H1 (cell line): ENCODE measurements at regions of chr7 and their contacts with region 1.

Region 1: DNA sequence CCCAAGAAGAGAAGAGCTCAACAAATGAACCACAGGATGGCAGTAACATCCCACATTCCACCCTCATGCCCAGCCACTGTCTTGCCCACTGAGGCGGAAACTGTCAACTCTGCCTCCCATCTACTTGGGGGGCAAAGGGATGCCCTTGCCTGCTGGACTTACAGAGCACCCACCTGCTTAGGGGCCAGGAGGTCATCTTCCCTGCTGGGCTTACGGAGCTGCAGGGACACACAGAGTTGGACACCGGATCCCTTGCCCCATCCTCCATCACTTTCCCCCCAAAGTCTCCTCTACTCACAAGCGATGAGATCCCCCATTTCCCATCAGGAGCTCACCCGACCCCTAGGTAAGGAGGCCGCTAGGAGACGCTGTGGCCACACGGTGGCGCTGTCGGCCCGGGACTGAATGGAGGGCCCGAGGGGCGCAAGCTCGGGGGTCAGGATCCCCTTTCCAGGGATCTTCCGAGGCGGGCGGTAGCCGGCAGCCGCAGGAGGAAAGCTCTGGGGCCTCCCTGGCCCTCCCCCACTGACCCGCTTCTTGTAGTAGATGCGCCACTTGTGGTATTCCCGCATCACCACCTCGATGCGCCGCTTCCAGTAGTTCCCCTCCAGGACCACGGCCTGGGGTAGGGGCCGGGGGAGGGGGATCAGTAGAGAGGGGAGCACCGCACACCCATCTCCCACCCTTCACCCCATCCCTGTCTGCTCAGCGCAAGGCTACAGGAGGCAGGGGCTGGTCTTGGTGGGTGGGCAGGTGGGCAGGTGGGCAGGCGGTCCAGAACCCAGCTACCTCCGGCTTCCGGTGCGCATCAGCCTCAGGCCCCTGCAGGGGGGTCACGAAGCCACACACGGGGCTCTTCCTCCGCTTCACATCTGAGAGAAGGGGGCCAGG is 17.3 kb downstream of the MLXIPL start:
- DNase-seq: peak in 1 of 2 experiments; percentile 97
- H3K4me3 ChIP-seq: peak overlapping the region in 3 of 4 experiments; percentile 11 to 61 (median 26); a peak in 5 of 8 replicates
- H3K27ac ChIP-seq: no peak overlapping the region
- H3K4me1 ChIP-seq: peaks cover 0 to 7% (median 4%) of the 10 kb centered on the region in 4 experiments; a peak in 6 of 7 replicates
- H3K27me3 ChIP-seq: no peaks in the 10 kb centered on the region; a peak in 1 of 7 replicates
- CTCF ChIP-seq: peak; percentile 91 to 97 (median 92)
- EP300 ChIP-seq: no peak
- POLR2A ChIP-seq: no peak
- RAD21 ChIP-seq: peak; percentile 96 to 97

Region 2: GRCh38 chr7:73593207-73594045 is 13.6 kb before region 1 on chr7:
- CTCF ChIA-PET with region 1: interaction called, 74 read pairs
- POLR2A ChIA-PET with region 1: interaction called, 6 read pairs
- DNase-seq: no peak
- H3K4me3 ChIP-seq: no peak overlapping the region
- H3K27ac ChIP-seq: no peak overlapping the region
- H3K4me1 ChIP-seq: peaks cover 0 to 10% (median 3%) of the 10 kb centered on the region in 4 experiments; a peak in 4 of 7 replicates
- H3K27me3 ChIP-seq: peaks cover 0 to 4% (median 4%) of the 10 kb centered on the region in 4 experiments; a peak in 4 of 7 replicates
- CTCF ChIP-seq: no peak
- EP300 ChIP-seq: no peak
- POLR2A ChIP-seq: no peak
- RAD21 ChIP-seq: peak in 1 of 2 experiments; percentile 4; a peak in 1 of 4 replicates

Region 3: DNA sequence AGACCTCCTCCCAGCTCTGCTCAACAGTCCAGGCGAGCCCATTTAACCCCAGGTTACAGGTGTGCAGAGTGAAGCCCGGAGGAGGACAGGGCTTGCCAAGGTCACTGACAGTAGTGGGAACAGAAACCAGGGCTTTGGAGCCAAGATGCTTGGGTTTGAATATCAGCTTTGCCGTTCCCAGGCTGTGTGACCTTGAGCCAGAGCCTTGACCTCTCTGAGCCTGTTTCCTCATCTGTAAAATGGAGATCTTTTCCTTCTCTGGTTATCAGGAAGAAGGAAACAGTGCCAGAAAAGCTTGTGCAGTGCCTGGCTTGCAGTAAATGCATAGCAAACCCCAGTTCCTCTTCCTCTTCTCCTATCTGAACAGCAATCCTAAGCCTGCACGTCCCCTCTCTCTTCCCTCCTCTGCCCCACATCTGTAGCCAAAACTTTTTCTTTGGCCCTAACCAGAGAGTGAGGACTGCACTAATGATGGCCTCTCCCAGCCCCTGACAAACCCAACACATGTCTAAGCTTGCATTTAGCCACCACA is 38.7 kb after region 1 on chr7:
- CTCF ChIA-PET with region 1: interaction called, 21 read pairs
- POLR2A ChIA-PET with region 1: no interaction called
- DNase-seq: no peak
- H3K4me3 ChIP-seq: no peak overlapping the region
- H3K27ac ChIP-seq: no peak overlapping the region
- H3K4me1 ChIP-seq: peaks cover 0 to 14% (median 7%) of the 10 kb centered on the region in 4 experiments; a peak in 6 of 7 replicates
- H3K27me3 ChIP-seq: peaks cover 0 to 30% (median 25%) of the 10 kb centered on the region in 4 experiments; a peak in 6 of 7 replicates
- CTCF ChIP-seq: no peak
- EP300 ChIP-seq: no peak
- POLR2A ChIP-seq: no peak
- RAD21 ChIP-seq: no peak

Region 4: GRCh38 chr7:73667344-73668102 is 60.5 kb after region 1 on chr7 and contains the start of gene VPS37D:
- CTCF ChIA-PET with region 1: interaction called, 72 read pairs
- POLR2A ChIA-PET with region 1: interaction called, 3 read pairs
- DNase-seq: peak; percentile 70 to 99
- H3K4me3 ChIP-seq: peak within 1 kb of the TSS; percentile 37 to 63 (median 46)
- H3K27ac ChIP-seq: no peak within 1 kb of the TSS
- H3K4me1 ChIP-seq: peaks cover 0 to 20% (median 9%) of the 10 kb centered on the region in 4 experiments; a peak in 6 of 7 replicates
- H3K27me3 ChIP-seq: no peaks in the 10 kb centered on the region; a peak in 1 of 7 replicates
- CTCF ChIP-seq: peak; percentile 73 to 93 (median 79)
- EP300 ChIP-seq: peak in 1 of 2 experiments; percentile 85; a peak in 2 of 3 replicates
- POLR2A ChIP-seq: no peak
- RAD21 ChIP-seq: peak; percentile 56 to 81
- total RNA-seq, gene VPS37D: 3.4 and 3.8 TPM in 2 replicates

Region 5: DNA sequence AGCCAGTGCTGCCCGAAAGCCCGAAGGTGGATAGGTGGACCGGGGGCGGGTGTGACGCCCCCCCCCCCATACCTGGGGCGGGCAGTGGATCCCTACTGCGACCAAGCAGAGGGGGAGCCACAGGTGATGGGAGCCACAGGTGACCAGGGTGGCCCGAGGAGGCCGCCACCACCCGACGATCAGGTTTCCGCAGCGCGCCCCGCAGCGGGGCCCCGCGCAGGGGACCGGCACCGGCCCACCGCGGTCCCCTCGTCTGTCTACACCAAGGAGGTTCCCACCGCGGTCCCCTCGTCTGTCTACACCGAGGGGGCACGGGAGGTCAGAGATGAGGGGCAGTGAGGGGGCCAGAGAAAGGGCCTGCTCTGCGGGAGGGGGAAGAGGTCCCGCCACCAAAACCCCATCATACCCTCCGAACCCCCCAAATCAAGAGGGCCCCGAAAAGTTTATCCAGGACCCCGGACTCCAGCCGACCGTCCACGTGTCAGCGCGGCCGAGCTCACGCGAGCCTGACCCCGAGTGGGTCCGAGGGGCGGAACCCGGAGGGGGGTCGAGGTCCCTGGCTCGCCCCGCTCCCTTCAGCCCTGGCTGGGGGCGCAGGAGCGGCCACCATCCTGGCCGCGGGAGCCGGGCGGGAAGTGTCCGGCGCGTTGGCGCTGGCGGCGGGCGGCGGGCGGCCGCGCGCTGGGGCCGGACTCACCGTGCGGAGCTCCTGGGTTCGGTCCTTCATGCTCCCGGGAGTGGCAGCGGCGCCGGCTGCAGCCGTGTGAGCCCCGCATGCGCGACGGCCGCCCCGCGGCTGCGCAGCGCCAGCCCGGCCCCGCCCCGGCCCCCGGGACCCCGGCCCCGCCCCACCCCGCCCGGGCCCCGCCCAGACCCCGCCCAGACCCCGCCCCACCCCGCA is 112.1 kb after region 1 on chr7 and contains the start of gene STX1A:
- CTCF ChIA-PET with region 1: interaction called, 57 read pairs
- POLR2A ChIA-PET with region 1: no interaction called
- DNase-seq: no peak
- H3K4me3 ChIP-seq: peak within 1 kb of the TSS; percentile 73 to 92 (median 86)
- H3K27ac ChIP-seq: no peak within 1 kb of the TSS
- H3K4me1 ChIP-seq: no peaks in the 10 kb centered on the region; a peak in 3 of 7 replicates
- H3K27me3 ChIP-seq: peaks cover 0 to 18% (median 13%) of the 10 kb centered on the region in 4 experiments; a peak in 5 of 7 replicates
- CTCF ChIP-seq: no peak
- EP300 ChIP-seq: no peak
- POLR2A ChIP-seq: no peak
- RAD21 ChIP-seq: 0 out of 4 replicates have a peak, but pooled peaks of 1 of the 2 experiments have one; percentile 2
- total RNA-seq, gene STX1A: 9.9 and 13.5 TPM in 2 replicates

Region 6: DNA sequence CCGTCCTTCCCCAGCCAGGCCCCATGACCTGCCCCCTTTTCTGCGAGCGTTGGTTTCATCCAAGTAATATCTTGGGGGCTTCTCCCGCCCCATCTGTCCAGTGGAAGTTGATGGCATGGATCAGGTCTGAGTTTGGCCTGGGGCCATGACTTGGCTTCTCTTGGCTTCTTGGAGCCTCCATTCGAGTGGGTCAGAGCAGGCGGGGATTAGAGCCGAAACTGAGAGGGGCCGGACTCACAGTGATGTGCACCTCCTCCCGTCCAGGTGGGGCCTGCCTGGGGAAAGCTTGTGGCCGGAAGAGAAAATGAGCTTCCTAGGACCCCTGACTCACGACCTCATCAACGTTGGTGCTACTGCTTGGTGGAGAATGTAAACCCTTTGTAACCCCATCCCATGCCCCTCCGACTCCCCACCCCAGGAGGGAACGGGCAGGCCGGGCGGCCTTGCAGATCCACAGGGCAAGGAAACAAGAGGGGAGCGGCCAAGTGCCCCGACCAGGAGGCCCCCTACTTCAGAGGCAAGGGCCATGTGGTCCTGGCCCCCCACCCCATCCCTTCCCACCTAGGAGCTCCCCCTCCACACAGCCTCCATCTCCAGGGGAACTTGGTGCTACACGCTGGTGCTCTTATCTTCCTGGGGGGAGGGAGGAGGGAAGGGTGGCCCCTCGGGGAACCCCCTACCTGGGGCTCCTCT is 461.5 kb after region 1 on chr7:
- CTCF ChIA-PET with region 1: no interaction called
- POLR2A ChIA-PET with region 1: no interaction called
- DNase-seq: no peak
- H3K4me3 ChIP-seq: no peak overlapping the region
- H3K27ac ChIP-seq: no peak overlapping the region
- H3K4me1 ChIP-seq: peaks cover 0 to 11% (median 3%) of the 10 kb centered on the region in 4 experiments; a peak in 3 of 7 replicates
- H3K27me3 ChIP-seq: no peaks in the 10 kb centered on the region
- CTCF ChIP-seq: no peak
- EP300 ChIP-seq: no peak
- POLR2A ChIP-seq: no peak
- RAD21 ChIP-seq: no peak